ENCODE measurements at regions of chr14 and their contacts with region 1.

Region 1: GRCh38 chr14:23379366-23380196 is 2.7 kb downstream of the CMTM5 start:
- DNase-seq: peak; percentile 43
- H3K4me3 Mint-ChIP-seq: no peak overlapping the region
- H3K27ac Mint-ChIP-seq: no peak overlapping the region
- H3K4me1 Mint-ChIP-seq: no peaks in the 10 kb centered on the region
- H3K27me3 Mint-ChIP-seq: no peaks in the 10 kb centered on the region

Region 2: DNA sequence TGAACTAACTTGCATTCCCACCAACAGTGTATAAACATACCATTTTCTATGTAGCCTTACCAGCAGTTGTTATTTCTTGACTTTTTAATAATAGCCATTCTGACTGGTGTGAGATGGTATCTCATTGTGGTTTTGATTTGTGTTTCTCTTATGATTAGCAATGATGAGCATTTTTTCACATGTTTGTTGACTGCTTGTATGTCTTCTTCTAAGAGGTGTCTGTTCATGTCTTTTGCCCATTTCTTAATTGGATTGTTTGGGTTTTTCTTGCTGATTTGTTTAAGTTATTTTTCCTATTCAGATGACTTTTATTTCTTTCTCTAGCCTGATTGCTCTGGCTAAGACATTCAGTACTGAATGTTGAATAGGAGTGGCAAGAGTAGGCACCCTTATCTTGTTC is 1020.9 kb before region 1 on chr14:
- intact Hi-C with region 1: no loop called
- DNase-seq: no peak
- H3K4me3 Mint-ChIP-seq: no peak overlapping the region
- H3K27ac Mint-ChIP-seq: no peak overlapping the region
- H3K4me1 Mint-ChIP-seq: no peaks in the 10 kb centered on the region
- H3K27me3 Mint-ChIP-seq: no peaks in the 10 kb centered on the region

Region 3: DNA sequence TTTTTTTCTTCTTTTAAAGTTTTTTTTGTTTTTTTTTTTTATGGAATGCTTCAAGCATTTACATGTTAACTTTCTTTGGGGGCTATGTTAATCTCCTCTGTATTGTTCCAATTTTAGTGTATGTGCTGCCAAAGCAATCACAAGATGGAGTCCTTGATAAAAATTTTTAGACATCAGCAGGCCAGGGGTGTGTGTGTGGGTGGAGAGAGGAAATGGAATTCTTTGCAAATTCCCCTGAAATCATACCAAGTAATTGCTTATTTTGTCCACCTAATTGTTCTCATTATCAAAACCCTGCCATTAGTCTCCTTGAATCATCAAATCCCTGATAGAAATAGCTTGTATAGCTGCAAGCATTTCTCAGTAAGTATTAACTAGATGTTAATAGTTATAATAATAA is 120.2 kb before region 1 on chr14:
- intact Hi-C with region 1: loop called (anchors 2 kb)
- DNase-seq: no peak
- H3K4me3 Mint-ChIP-seq: no peak overlapping the region
- H3K27ac Mint-ChIP-seq: no peak overlapping the region
- H3K4me1 Mint-ChIP-seq: no peaks in the 10 kb centered on the region
- H3K27me3 Mint-ChIP-seq: peaks cover 36% of the 10 kb centered on the region

Region 4: DNA sequence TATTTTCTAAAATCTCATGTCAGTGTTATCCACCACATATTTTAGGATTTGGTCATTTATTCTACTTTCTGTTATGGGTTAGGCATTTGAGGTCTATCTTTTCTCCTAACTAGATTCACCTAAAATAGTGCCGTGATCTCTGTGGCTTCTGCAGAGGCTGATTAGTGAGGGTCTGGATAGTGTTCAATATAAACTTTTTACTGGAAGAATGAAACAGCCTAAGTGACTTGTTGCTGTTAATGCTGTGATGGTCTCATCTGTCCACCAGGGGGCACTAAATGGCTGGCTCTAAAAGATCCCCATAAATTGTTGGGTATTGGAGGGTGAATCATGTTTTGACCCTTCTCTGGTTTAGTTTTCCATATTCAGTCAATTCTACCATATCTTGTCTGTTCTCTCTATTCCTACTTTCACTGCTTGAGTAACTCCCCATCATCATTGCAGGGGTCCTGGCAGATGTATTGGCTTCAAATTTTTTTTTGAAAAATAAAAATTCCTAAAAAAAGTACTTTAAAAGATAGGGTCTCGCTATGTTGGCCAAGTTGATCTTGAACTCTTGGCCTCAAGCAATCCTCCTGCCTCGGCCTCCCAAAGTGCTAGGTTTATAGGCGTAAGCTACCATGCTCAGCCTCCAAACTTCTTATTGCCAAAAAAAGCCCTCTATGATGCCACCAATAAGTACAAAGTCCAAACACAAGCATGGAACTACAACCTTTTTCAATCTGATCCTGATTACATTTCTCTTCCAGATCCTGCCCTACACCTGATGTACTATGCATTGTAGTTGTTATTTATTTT is 51.4 kb before region 1 on chr14:
- intact Hi-C with region 1: loop called (anchors 1 kb)
- DNase-seq: peak; percentile 34
- H3K4me3 Mint-ChIP-seq: no peak overlapping the region
- H3K27ac Mint-ChIP-seq: no peak overlapping the region
- H3K4me1 Mint-ChIP-seq: peaks cover 7% of the 10 kb centered on the region
- H3K27me3 Mint-ChIP-seq: no peaks in the 10 kb centered on the region

Region 5: GRCh38 chr14:23406244-23406643 is 26.7 kb after region 1 on chr14:
- intact Hi-C with region 1: no loop called
- DNase-seq: no peak
- H3K4me3 Mint-ChIP-seq: no peak overlapping the region
- H3K27ac Mint-ChIP-seq: no peak overlapping the region
- H3K4me1 Mint-ChIP-seq: no peaks in the 10 kb centered on the region
- H3K27me3 Mint-ChIP-seq: no peaks in the 10 kb centered on the region

Region 6: GRCh38 chr14:23660290-23661226 is 281.0 kb after region 1 on chr14:
- intact Hi-C with region 1: no loop called
- DNase-seq: no peak
- H3K4me3 Mint-ChIP-seq: no peak overlapping the region
- H3K27ac Mint-ChIP-seq: no peak overlapping the region
- H3K4me1 Mint-ChIP-seq: no peaks in the 10 kb centered on the region
- H3K27me3 Mint-ChIP-seq: peaks cover 3% of the 10 kb centered on the region

Region 7: GRCh38 chr14:24171422-24172260 is 792.1 kb after region 1 on chr14 and contains the start of gene REC8:
- intact Hi-C with region 1: no loop called
- DNase-seq: peak; percentile 41
- H3K4me3 Mint-ChIP-seq: peak within 1 kb of the TSS; percentile 69
- H3K27ac Mint-ChIP-seq: peak within 1 kb of the TSS; percentile 58
- H3K4me1 Mint-ChIP-seq: peaks cover 27% of the 10 kb centered on the region
- H3K27me3 Mint-ChIP-seq: no peaks in the 10 kb centered on the region
- total RNA-seq, gene REC8: 20.0 and 28.2 TPM in 2 replicates